MCF 10A (cell line): ENCODE measurements at regions of chr1 and their contacts with region 1.

Region 1: DNA sequence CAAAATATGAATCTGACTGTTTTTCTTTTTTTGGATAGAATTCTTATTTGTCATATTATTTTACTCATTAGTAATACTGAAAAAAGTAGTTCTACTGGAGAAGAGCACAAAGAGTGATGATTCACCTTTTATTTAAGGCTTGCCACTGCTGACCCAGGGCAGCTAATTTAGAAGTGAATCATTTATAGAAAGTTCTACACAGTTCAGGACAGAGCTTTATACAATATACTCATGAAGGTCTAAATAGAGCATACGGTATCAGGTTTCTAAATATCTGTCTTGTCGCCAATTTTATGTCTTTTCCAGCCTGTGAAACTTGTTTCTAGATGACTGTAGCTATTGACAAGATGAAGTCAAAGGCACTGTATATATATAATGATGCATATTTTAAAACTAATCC is 25.0 kb downstream of the GIPC2 start:
- DNase-seq: peak; percentile 69
- H3K4me3 Mint-ChIP-seq: no peak overlapping the region
- H3K27ac Mint-ChIP-seq: no peak overlapping the region
- H3K4me1 Mint-ChIP-seq: peaks cover 14% of the 10 kb centered on the region
- H3K27me3 Mint-ChIP-seq: no peaks in the 10 kb centered on the region
- CTCF ChIP-seq: no peak

Region 2: GRCh38 chr1:78040484-78041089 is 30.2 kb before region 1 on chr1:
- CTCF ChIA-PET with region 1: no interaction called
- POLR2A ChIA-PET with region 1: no interaction called
- intact Hi-C with region 1: no loop called
- DNase-seq: no peak
- H3K4me3 Mint-ChIP-seq: no peak overlapping the region
- H3K27ac Mint-ChIP-seq: peak overlapping the region; percentile 29
- H3K4me1 Mint-ChIP-seq: peaks cover 15% of the 10 kb centered on the region
- H3K27me3 Mint-ChIP-seq: no peaks in the 10 kb centered on the region
- CTCF ChIP-seq: no peak

Region 3: GRCh38 chr1:78095593-78095992 is 24.8 kb after region 1 on chr1:
- CTCF ChIA-PET with region 1: no interaction called
- POLR2A ChIA-PET with region 1: interaction called, 11 read pairs
- intact Hi-C with region 1: no loop called
- DNase-seq: peak; percentile 20
- H3K4me3 Mint-ChIP-seq: no peak overlapping the region
- H3K27ac Mint-ChIP-seq: peak overlapping the region; percentile 41
- H3K4me1 Mint-ChIP-seq: peaks cover 25% of the 10 kb centered on the region
- H3K27me3 Mint-ChIP-seq: no peaks in the 10 kb centered on the region
- CTCF ChIP-seq: no peak

Region 4: DNA sequence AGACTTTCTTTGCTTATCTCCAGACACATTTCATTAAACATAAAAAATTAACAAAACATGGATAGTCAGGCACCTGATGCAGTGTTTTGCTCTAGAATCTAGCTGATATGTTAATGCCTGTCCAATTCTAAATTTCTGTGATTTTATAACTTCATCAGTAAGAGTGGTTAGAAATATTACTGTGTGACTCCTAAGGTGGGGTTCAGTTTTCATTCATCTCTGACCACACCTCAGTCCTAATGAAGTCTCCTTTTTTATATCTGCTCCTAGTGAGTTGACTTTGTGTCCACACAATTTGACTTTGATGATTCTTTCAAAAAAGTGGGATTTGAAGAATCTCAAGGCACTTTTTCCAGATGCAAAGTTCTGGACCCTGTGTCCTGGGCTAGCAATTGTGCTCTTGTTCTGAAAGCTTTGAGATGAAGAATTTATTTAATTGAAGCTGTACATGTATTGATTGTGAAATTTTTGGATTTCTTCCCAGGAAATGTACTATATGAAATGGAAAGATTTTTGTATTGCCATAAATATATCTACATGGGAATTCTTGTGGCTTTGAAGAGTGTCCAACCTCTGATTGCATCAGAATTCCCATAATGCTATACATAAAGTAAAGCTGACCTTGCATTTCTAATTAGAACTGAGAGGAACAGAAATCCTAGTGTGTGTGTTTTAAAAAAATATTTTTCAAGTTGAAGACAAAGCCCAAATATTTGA is 86.2 kb after region 1 on chr1:
- CTCF ChIA-PET with region 1: no interaction called
- POLR2A ChIA-PET with region 1: no interaction called
- intact Hi-C with region 1: no loop called
- DNase-seq: peak; percentile 88
- H3K4me3 Mint-ChIP-seq: no peak overlapping the region
- H3K27ac Mint-ChIP-seq: peak overlapping the region; percentile 81
- H3K4me1 Mint-ChIP-seq: peaks cover 25% of the 10 kb centered on the region
- H3K27me3 Mint-ChIP-seq: no peaks in the 10 kb centered on the region
- CTCF ChIP-seq: no peak